ENCODE measurements at regions of chr10 and their contacts with region 1.

Region 1: DNA sequence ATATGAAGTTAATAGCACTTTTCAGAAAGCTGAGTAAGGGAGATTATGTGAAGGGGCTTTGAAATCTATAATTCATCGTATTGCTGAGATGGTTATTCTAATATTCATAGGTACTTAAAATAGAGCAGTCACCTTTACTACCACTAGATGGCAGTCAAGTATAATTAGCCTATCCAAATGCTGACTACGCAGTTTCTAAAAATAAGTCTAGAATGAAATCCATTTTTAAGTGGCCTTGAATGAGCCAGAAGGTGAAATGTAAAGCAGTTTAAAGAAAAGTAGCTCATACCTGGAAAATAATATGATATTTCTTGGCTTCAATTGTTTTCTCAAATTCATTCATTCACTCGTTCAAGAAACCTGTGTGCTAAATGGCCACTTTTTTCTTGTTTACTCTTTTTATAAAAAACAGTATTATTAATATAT is 1277.1 kb downstream of the GATA3 start:
- DNase-seq: peak; percentile 10
- H3K4me3 ChIP-seq: no peak overlapping the region
- CTCF ChIP-seq: peak; percentile 48

Region 2: DNA sequence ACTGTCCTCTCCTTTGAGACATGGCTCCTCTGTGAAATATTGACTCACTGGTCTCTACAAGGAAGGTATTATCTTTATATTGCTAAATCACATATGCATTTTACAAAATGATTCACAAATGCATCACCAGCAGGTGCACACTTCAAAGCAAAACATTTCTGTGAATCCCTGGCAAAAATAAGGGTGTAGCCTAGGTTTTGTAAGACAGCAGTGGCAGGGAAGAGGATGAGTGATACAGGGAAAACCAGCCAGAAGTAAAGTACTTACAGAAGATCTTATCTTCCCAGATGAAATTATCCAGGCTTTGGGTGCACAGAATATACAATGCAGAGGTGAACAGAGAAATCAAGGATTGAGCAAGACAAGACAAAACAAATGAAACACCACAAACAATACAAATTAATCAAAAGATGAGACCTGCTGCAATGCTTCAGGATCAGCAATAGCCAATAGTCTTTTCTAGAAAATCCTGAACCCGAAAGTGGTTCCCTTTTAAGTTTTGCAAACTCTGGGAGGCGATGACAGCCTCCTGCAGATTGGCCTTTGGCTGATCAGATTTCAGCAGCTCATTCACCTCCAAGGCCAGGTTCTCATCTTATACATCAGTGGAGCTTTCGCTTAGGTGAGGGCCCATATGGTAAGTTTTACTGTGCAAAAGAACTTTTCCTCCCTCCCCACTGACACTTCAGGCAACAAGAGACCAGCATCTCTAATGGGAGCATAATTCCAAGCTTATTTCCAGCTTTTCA is 182.3 kb before region 1 on chr10:
- CTCF ChIA-PET with region 1: no interaction called
- POLR2A ChIA-PET with region 1: no interaction called
- DNase-seq: no peak
- H3K4me3 ChIP-seq: no peak overlapping the region
- CTCF ChIP-seq: no peak

Region 3: GRCh38 chr10:9175200-9175599 is 156.4 kb before region 1 on chr10:
- CTCF ChIA-PET with region 1: no interaction called
- POLR2A ChIA-PET with region 1: no interaction called
- DNase-seq: no peak
- H3K4me3 ChIP-seq: no peak overlapping the region
- CTCF ChIP-seq: no peak

Region 4: GRCh38 chr10:9311702-9312499 is 19.7 kb before region 1 on chr10:
- CTCF ChIA-PET with region 1: interaction called, 11 read pairs
- POLR2A ChIA-PET with region 1: no interaction called
- DNase-seq: no peak
- H3K4me3 ChIP-seq: no peak overlapping the region
- CTCF ChIP-seq: no peak

Region 5: GRCh38 chr10:9342885-9343570 is 11.4 kb after region 1 on chr10:
- CTCF ChIA-PET with region 1: interaction called, 19 read pairs
- POLR2A ChIA-PET with region 1: no interaction called
- DNase-seq: no peak
- H3K4me3 ChIP-seq: no peak overlapping the region
- CTCF ChIP-seq: peak; percentile 48

Region 6: GRCh38 chr10:9381733-9382532 is 50.3 kb after region 1 on chr10:
- CTCF ChIA-PET with region 1: no interaction called
- POLR2A ChIA-PET with region 1: no interaction called
- DNase-seq: no peak
- H3K4me3 ChIP-seq: no peak overlapping the region
- CTCF ChIP-seq: no peak